ENCODE measurements at regions of chr17 and their contacts with region 1.

Region 1: DNA sequence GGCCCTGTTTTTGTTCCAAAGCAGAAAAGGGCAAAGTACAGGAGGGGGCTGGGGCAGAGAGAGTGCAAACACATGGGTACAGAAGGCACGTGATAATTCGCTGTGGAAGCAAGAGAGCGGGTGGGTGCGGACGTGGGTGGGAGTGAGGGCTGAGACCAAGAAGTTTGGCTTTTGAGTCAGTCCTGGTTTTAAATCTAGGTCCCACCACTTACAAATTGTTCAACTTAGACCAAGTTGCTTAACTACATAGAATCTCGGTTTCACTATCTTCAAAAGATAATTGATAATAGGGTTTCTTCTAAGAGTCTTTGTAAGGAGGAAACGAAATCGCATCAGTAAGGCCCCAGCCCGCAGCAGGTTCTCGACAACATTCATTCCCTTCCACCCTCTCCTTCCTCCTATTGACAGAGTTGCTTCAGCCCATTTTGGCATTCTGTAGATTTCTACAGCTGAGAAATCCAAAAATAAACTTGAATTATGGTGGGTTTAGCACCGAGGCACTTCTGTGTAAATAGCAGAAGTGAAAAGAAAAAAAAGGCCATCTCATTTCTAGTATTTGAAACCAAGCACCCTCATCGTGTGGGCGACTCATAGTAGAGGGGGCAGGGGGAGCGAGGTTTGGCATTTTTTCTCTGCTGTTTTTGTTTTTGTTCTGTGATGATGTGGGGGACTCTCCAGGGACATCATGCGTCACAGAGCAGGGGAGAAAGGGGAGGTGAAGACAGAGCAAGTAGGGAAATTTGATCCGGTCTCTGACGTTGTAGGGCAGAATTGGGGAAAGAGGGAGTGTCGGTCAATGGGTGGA is 33.6 kb upstream of the CCR7 start:
- DNase-seq: peak; percentile 93
- ATAC-seq: peak; percentile 57
- H3K4me3 Mint-ChIP-seq: peak overlapping the region; percentile 65
- H3K27ac Mint-ChIP-seq: peak overlapping the region; percentile 97
- H3K4me1 Mint-ChIP-seq: peaks cover 97% of the 10 kb centered on the region
- H3K27me3 Mint-ChIP-seq: no peaks in the 10 kb centered on the region

Region 2: DNA sequence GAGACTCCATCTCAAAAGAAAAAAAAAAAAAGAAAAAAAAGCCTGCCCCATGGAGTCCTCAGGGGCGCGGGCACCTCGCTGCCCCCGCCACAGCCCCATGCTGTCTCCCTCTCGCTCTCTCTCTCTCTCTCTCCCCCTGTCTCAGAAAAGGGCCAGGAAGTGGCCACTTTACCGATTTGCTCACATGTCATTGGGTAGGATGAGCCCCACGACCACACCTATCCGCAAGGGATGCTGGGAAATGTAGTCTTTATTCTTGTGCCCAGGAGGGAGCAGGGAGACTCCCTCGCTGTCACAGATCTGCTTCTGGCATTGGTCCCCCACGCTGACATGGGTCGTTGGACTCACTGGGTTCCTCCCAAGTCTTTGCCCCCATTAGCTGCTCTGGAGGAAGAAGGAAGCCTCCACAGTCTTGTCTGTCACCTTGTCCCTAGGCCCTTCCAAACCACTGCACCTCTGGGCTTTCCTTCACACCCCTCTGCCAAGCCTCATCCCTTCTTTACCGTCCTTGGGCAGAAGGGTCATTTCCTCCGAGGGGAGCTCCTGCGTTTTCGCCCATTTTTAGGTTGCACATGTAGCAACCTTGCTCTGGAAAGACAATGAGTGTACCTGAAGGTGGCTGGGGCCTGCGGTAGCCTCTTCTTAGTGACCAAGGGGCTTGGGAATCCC is 227.5 kb before region 1 on chr17:
- CTCF ChIA-PET with region 1: no interaction called
- POLR2A ChIA-PET with region 1: no interaction called
- intact Hi-C with region 1: loop called in 1 of 2 experiments (anchors 5 kb)
- DNase-seq: peak; percentile 57
- ATAC-seq: peak; percentile 75
- H3K4me3 Mint-ChIP-seq: no peak overlapping the region
- H3K27ac Mint-ChIP-seq: no peak overlapping the region
- H3K4me1 Mint-ChIP-seq: peaks cover 33% of the 10 kb centered on the region
- H3K27me3 Mint-ChIP-seq: no peaks in the 10 kb centered on the region

Region 3: DNA sequence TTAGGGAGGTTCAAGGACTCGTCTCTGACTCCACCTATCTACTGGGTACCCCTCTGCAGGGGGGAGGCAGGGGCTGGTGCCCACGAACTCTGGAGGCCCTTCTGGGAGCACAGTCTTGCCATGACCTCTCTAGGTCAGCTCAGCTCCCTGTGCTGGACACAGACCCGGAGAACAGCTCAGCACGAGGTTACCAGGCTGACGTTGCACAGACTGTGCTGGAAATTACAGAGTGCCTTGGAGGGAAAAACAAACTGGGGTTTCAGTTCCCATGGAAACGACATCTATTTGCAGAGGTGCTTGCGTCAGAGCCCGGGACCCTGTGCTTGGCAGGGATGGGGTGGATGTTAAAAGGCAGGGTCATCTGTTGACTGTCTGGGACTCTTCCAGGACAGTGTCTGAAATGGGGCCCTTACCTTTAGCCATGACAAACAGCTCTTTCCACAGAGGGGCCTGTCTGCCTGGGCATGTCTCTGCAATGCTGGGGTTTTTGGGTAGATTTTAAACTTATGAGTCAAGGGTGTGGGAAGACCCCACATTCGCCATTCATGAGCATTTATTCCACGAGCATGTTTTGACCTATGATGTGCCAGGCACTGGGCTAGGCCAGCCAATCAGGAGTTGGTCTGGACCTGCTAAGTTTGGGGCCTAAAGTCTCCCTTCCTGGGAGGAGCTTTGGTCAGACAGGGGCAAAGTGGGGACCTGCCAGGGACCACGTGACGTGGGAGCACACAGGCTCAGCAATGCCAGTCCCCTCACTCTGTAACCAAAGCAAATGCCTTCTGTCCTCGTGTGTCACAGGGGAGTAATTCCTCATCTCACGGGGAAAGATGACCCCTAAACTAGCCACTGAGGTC is 56.1 kb before region 1 on chr17:
- CTCF ChIA-PET with region 1: no interaction called
- POLR2A ChIA-PET with region 1: interaction called, 14 read pairs
- intact Hi-C with region 1: loop called in 1 of 2 experiments (anchors 2 kb)
- DNase-seq: peak; percentile 76
- ATAC-seq: peak; percentile 52
- H3K4me3 Mint-ChIP-seq: peak overlapping the region; percentile 63
- H3K27ac Mint-ChIP-seq: peak overlapping the region; percentile 98
- H3K4me1 Mint-ChIP-seq: peaks cover 88% of the 10 kb centered on the region
- H3K27me3 Mint-ChIP-seq: no peaks in the 10 kb centered on the region

Region 4: DNA sequence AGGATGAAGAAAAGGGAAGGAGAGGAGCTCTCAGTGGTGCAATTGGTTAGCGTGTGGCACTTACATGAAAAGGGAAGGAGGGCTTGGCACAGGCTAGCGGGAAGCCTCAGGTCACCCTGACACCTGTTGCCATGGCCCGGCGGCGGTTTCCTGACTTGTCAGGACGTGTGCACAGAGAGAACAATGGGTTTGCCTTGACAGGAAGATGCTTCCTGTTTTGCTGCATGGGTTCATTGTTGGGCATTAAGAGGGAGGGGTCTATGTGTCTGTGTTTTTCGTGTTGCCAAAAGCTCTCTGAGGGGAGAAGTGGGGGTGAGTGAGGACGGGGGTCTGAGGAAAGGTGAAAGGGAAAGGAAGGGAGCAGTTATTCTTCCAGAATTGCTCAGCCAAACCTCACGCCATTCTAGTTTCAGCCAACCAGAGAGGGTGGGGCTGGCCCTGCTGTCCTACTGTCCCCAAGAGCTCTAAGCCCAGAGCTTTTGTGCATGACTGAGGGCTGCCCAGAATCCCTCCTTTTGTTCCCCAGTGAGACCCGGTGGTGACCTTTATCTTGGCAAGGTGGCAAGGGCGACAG is 16.4 kb before region 1 on chr17:
- CTCF ChIA-PET with region 1: interaction called, 18 read pairs
- POLR2A ChIA-PET with region 1: interaction called, 6 read pairs
- intact Hi-C with region 1: loop called (anchors 1 to 2 kb)
- DNase-seq: peak; percentile 82
- ATAC-seq: peak; percentile 68
- H3K4me3 Mint-ChIP-seq: peak overlapping the region; percentile 50
- H3K27ac Mint-ChIP-seq: peak overlapping the region; percentile 93
- H3K4me1 Mint-ChIP-seq: peaks cover 91% of the 10 kb centered on the region
- H3K27me3 Mint-ChIP-seq: no peaks in the 10 kb centered on the region

Measured in activated CD4-positive, alpha-beta T cell treated with anti-CD3 and anti-CD28 coated beads for 36 hours (primary cell).